ENCODE measurements at regions of chr1 and their contacts with region 1.

Region 1: DNA sequence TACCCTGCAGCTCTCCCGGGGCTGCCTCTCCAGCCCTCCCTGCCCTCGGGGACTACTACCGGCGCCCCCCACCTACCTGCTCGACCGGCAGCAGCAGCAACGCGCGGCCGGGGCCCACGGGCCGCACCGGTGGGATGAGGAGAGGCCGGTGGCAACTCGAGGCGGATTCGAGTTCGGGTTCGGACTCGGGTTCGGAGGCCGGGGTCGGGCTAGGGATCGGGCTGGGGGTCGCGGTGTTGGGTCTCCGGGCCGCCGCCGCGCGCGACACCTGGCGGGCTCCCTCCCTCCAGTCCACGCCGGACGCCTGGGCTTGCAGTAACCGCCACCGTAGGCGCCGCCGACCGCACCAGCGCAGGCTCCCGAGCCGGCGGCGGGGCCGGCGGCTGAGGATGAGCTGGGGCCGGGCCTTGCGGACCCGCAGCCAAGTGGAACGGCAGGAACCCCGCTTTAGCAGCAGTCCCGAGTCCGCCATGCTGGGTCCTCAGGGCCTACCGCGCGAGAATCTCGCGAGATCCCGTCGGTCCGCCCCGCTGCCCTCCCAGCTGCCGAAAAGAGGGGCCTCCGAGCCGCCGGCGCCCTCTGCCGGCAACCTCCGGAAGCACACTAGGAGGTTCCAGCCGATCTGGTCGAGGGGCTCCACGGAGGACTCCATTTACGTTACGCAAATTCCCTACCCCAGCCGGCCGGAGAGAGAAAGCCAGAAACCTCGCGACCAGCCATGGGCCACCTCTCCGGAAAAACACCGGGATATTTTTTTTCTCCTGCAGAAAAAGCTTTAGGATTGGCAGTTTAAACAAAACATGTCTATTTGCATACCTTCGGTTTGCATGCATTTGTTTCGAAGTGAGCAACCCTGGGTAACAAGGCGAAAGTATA is at the start of gene NOL9:
- DNase-seq: peak; percentile 92 to 95 (median 94)
- H3K4me3 ChIP-seq: peak within 1 kb of the TSS; percentile 71 to 80
- H3K4me3 Mint-ChIP-seq: peak within 1 kb of the TSS; percentile 77 to 85 (median 81)
- H3K27ac ChIP-seq: peak within 1 kb of the TSS; percentile 86
- H3K27ac Mint-ChIP-seq: peak within 1 kb of the TSS; percentile 35 to 88 (median 78)
- H3K4me1 ChIP-seq: peaks cover 21% of the 10 kb centered on the region
- H3K4me1 Mint-ChIP-seq: peaks cover 2 to 20% (median 12%) of the 10 kb centered on the region in 4 donors
- H3K27me3 ChIP-seq: no peaks in the 10 kb centered on the region
- H3K27me3 Mint-ChIP-seq: no peaks in the 10 kb centered on the region
- total RNA-seq, gene NOL9: 59.9 to 60.9 TPM

Region 2: GRCh38 chr1:6489799-6490180 is 64.5 kb before region 1 on chr1:
- CTCF ChIA-PET with region 1: interaction called, 86 read pairs
- POLR2A ChIA-PET with region 1: interaction called, 23 read pairs
- intact Hi-C with region 1: loop called (anchors 1 kb)
- DNase-seq: peak; percentile 73 to 80 (median 77)
- H3K4me3 ChIP-seq: peak overlapping the region; percentile 78 to 80
- H3K4me3 Mint-ChIP-seq: peak overlapping the region; percentile 69 to 87 (median 81)
- H3K27ac ChIP-seq: peak overlapping the region; percentile 57
- H3K27ac Mint-ChIP-seq: peak overlapping the region in 3 of 7 donors; percentile 47 to 72 (median 59)
- H3K4me1 ChIP-seq: peaks cover 28% of the 10 kb centered on the region
- H3K4me1 Mint-ChIP-seq: peaks cover 15 to 53% (median 31%) of the 10 kb centered on the region in 4 donors
- H3K27me3 ChIP-seq: peaks cover 10% of the 10 kb centered on the region
- H3K27me3 Mint-ChIP-seq: peaks cover 6 to 9% of the 10 kb centered on the region in 2 donors

Region 3: DNA sequence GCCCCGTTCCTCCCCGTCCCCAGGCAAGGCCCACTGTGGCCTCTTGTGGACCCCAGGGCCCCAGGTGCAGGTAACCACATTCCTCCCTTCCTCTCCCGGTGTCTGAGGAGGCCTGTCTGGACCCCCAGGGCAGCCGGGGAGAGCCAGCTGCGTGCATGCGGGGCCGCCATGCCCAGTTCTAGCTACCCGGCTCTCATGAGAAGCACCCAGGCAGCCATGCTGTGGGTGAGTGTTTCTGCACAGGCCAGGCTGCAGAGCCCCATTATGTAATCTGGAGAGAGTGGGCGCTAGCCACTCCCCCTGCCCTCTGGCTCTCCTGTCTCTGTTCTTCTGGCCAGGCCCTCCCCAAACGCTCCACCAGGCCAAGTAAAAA is 44.4 kb before region 1 on chr1:
- CTCF ChIA-PET with region 1: no interaction called
- POLR2A ChIA-PET with region 1: no interaction called
- intact Hi-C with region 1: no loop called
- DNase-seq: no peak
- H3K4me3 ChIP-seq: no peak overlapping the region
- H3K4me3 Mint-ChIP-seq: no peak overlapping the region
- H3K27ac ChIP-seq: no peak overlapping the region
- H3K27ac Mint-ChIP-seq: no peak overlapping the region
- H3K4me1 ChIP-seq: no peaks in the 10 kb centered on the region
- H3K4me1 Mint-ChIP-seq: no peaks in the 10 kb centered on the region
- H3K27me3 ChIP-seq: no peaks in the 10 kb centered on the region
- H3K27me3 Mint-ChIP-seq: peaks cover 0 to 5% of the 10 kb centered on the region in 2 donors

Region 4: GRCh38 chr1:6538956-6539355 is 15.3 kb before region 1 on chr1:
- CTCF ChIA-PET with region 1: interaction called, 36 read pairs
- POLR2A ChIA-PET with region 1: interaction called, 51 read pairs
- intact Hi-C with region 1: no loop called
- DNase-seq: no peak
- H3K4me3 ChIP-seq: no peak overlapping the region
- H3K4me3 Mint-ChIP-seq: no peak overlapping the region
- H3K27ac ChIP-seq: no peak overlapping the region
- H3K27ac Mint-ChIP-seq: peak overlapping the region in 3 of 7 donors; percentile 44 to 79 (median 76)
- H3K4me1 ChIP-seq: no peaks in the 10 kb centered on the region
- H3K4me1 Mint-ChIP-seq: peaks cover 6 to 14% (median 9%) of the 10 kb centered on the region in 4 donors
- H3K27me3 ChIP-seq: no peaks in the 10 kb centered on the region
- H3K27me3 Mint-ChIP-seq: no peaks in the 10 kb centered on the region

Region 5: DNA sequence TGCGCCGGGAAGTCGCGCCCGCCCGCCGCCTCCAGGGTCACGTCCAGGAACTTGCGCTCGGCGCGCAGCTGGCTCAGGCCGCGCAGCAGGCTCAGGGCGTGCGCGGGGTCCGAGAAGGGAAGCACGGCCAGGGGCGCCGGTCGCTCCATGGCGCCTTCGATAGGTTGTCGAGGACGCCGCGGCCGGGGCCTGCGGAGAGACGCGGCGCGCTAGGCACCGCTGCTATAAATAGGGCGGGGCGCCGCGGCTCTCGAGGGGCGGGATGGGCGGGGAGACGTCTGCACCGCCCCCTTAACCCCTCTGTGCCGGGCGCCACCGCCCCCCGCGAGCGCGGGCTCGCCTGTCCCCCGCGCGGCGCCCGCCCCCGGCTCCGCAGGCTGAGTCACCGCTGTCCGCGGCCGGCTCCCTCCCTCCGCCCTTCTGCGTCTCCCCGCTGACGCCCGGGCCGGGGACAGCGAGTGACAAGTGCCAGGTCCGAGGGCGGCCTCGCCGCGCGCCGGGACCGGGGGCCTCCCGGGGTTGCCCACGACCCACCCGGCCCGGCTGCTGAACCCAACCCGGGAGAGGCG is 48.5 kb after region 1 on chr1 and contains the start of gene KLHL21:
- CTCF ChIA-PET with region 1: interaction called, 24 read pairs
- POLR2A ChIA-PET with region 1: interaction called, 84 read pairs
- intact Hi-C with region 1: loop called (anchors 1 kb)
- DNase-seq: peak; percentile 75 to 85 (median 82)
- H3K4me3 ChIP-seq: peak within 1 kb of the TSS; percentile 87 to 92
- H3K4me3 Mint-ChIP-seq: peak within 1 kb of the TSS; percentile 93 to 99 (median 98)
- H3K27ac ChIP-seq: peak within 1 kb of the TSS; percentile 88
- H3K27ac Mint-ChIP-seq: peak within 1 kb of the TSS; percentile 95 to 99 (median 97)
- H3K4me1 ChIP-seq: peaks cover 40% of the 10 kb centered on the region
- H3K4me1 Mint-ChIP-seq: peaks cover 6 to 43% (median 30%) of the 10 kb centered on the region in 4 donors
- H3K27me3 ChIP-seq: no peaks in the 10 kb centered on the region
- H3K27me3 Mint-ChIP-seq: no peaks in the 10 kb centered on the region
- total RNA-seq, gene KLHL21: 80.6 to 85.2 TPM

Region 6: DNA sequence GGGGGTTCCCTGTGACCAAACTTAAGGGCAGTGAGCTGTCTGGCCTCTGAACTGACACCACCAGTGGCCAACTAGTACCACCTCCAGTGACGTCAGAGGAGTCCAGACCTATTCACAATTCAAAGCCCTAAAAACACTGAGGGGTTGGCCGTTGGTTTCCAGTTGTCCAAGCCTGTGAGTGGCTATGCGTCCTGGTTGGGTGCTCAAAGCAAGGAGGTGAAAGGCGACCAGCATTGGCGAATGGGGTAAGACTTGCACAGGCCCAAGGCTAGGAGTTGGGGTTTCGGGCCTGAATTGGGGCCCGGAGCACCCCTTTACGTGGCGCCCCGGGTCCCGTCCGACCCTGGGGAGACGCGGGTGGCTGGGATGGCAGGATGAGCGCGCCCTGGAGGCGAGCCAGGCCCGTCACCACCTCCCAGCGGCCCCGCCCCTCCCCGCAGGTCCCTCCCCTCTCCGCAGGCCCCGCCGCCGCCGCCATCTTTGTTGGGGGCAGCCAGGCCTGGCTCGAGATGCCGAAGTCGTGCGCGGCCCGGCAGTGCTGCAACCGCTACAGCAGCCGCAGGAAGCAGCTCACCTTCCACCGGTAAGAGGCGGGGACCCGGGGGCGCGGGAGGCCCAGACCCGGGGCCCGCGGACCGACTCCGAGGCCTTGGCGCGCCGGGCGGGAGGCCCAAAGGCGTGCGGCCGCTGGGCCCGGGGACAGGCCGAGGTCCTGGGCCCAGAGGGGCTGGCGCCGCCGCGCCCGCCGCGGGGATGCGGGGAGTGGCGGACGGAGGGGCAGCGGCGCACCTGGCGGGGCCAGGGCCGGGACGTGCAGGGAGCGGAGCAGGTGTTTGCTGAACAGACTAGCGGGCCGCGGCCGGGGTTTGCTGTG is 70.7 kb after region 1 on chr1 and contains the start of gene THAP3:
- CTCF ChIA-PET with region 1: interaction called, 10 read pairs
- POLR2A ChIA-PET with region 1: interaction called, 8 read pairs
- intact Hi-C with region 1: loop called (anchors 1 kb)
- DNase-seq: peak; percentile 84 to 91 (median 86)
- H3K4me3 ChIP-seq: peak within 1 kb of the TSS; percentile 63 to 73
- H3K4me3 Mint-ChIP-seq: peak within 1 kb of the TSS; percentile 90 to 95 (median 94)
- H3K27ac ChIP-seq: peak within 1 kb of the TSS; percentile 60
- H3K27ac Mint-ChIP-seq: peak within 1 kb of the TSS; percentile 78 to 93 (median 90)
- H3K4me1 ChIP-seq: peaks cover 23% of the 10 kb centered on the region
- H3K4me1 Mint-ChIP-seq: peaks cover 15 to 35% (median 28%) of the 10 kb centered on the region in 4 donors
- H3K27me3 ChIP-seq: no peaks in the 10 kb centered on the region
- H3K27me3 Mint-ChIP-seq: no peaks in the 10 kb centered on the region
- total RNA-seq, gene THAP3: 29.5 to 34.5 TPM

Region 7: GRCh38 chr1:6701437-6702153 is 147.3 kb after region 1 on chr1 and contains the start of gene DNAJC11:
- CTCF ChIA-PET with region 1: no interaction called
- POLR2A ChIA-PET with region 1: interaction called, 4 read pairs
- intact Hi-C with region 1: loop called (anchors 2 kb)
- DNase-seq: peak; percentile 88 to 96 (median 93)
- H3K4me3 ChIP-seq: peak within 1 kb of the TSS; percentile 61 to 81
- H3K4me3 Mint-ChIP-seq: peak within 1 kb of the TSS; percentile 93 to 97 (median 94)
- H3K27ac ChIP-seq: peak within 1 kb of the TSS; percentile 84
- H3K27ac Mint-ChIP-seq: peak within 1 kb of the TSS; percentile 85 to 98 (median 96)
- H3K4me1 ChIP-seq: peaks cover 22% of the 10 kb centered on the region
- H3K4me1 Mint-ChIP-seq: peaks cover 15 to 31% (median 26%) of the 10 kb centered on the region in 4 donors
- H3K27me3 ChIP-seq: no peaks in the 10 kb centered on the region
- H3K27me3 Mint-ChIP-seq: no peaks in the 10 kb centered on the region
- total RNA-seq, gene DNAJC11: 40.5 to 41.6 TPM

Region 8: DNA sequence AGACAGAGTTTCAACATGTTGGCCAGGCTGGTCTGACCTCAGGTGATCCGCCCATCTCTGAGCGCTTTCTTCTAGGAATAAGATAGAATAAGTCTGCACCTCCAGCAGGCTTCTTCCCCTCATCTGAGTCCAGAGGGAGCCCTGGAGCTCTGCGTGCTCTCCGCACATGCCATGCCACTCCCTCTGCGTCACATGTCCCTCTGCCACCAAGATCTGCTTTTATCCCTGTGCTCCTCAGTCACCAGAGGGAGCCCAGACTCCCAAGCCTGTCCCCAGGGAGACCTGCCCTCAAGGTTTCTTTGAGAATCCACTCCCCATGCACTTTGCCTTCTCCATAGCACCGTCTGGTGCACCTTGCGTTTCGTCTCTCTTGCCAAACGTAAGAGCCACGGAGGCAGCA is 444.0 kb after region 1 on chr1:
- CTCF ChIA-PET with region 1: no interaction called
- POLR2A ChIA-PET with region 1: no interaction called
- intact Hi-C with region 1: no loop called
- DNase-seq: no peak
- H3K4me3 ChIP-seq: no peak overlapping the region
- H3K4me3 Mint-ChIP-seq: no peak overlapping the region
- H3K27ac ChIP-seq: no peak overlapping the region
- H3K27ac Mint-ChIP-seq: no peak overlapping the region
- H3K4me1 ChIP-seq: no peaks in the 10 kb centered on the region
- H3K4me1 Mint-ChIP-seq: no peaks in the 10 kb centered on the region
- H3K27me3 ChIP-seq: no peaks in the 10 kb centered on the region
- H3K27me3 Mint-ChIP-seq: peaks cover 8 to 11% of the 10 kb centered on the region in 2 donors